ENCODE measurements at regions of chr16 and their contacts with region 1.

Region 1: DNA sequence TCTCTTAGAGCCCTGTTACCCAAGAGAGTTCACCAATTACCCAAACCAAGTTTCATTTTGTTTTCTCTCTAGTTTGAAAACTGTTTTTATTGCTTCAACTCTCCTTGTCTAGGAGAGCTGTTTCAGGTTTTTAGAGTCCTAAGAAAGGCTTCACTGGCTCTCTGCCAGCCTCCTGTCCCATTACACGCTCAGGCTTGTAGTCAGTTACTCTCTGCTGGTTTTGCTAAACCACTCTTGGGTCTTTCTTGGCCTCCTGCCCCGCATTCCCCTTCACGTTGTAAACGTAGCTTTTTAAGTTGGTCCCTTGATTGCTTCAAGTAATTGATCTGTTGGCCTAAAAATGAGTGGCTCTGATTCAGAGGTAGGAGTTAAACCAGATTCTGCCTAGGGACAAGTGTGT is 529.1 kb downstream of the MAF start:
- DNase-seq: no peak
- H3K4me3 Mint-ChIP-seq: no peak overlapping the region
- H3K27ac Mint-ChIP-seq: peak overlapping the region; percentile 21
- H3K4me1 Mint-ChIP-seq: peaks cover 74% of the 10 kb centered on the region
- H3K27me3 Mint-ChIP-seq: peaks cover 5% of the 10 kb centered on the region

Region 2: GRCh38 chr16:78794581-78795250 is 276.7 kb before region 1 on chr16:
- intact Hi-C with region 1: loop called (anchors 1 kb)
- DNase-seq: no peak
- H3K4me3 Mint-ChIP-seq: no peak overlapping the region
- H3K27ac Mint-ChIP-seq: peak overlapping the region; percentile 77
- H3K4me1 Mint-ChIP-seq: peaks cover 35% of the 10 kb centered on the region
- H3K27me3 Mint-ChIP-seq: no peaks in the 10 kb centered on the region

Region 3: GRCh38 chr16:78972986-78973385 is 98.4 kb before region 1 on chr16:
- intact Hi-C with region 1: no loop called
- DNase-seq: no peak
- H3K4me3 Mint-ChIP-seq: no peak overlapping the region
- H3K27ac Mint-ChIP-seq: no peak overlapping the region
- H3K4me1 Mint-ChIP-seq: no peaks in the 10 kb centered on the region
- H3K27me3 Mint-ChIP-seq: peaks cover 6% of the 10 kb centered on the region

Region 4: GRCh38 chr16:79047229-79047983 is 24.0 kb before region 1 on chr16:
- intact Hi-C with region 1: loop called (anchors 2 kb)
- DNase-seq: no peak
- H3K4me3 Mint-ChIP-seq: no peak overlapping the region
- H3K27ac Mint-ChIP-seq: no peak overlapping the region
- H3K4me1 Mint-ChIP-seq: peaks cover 33% of the 10 kb centered on the region
- H3K27me3 Mint-ChIP-seq: no peaks in the 10 kb centered on the region

Region 5: GRCh38 chr16:79217375-79218011 is 146.1 kb after region 1 on chr16:
- intact Hi-C with region 1: loop called (anchors 1 kb)
- DNase-seq: peak; percentile 19
- H3K4me3 Mint-ChIP-seq: no peak overlapping the region
- H3K27ac Mint-ChIP-seq: no peak overlapping the region
- H3K4me1 Mint-ChIP-seq: peaks cover 19% of the 10 kb centered on the region
- H3K27me3 Mint-ChIP-seq: no peaks in the 10 kb centered on the region

Region 6: DNA sequence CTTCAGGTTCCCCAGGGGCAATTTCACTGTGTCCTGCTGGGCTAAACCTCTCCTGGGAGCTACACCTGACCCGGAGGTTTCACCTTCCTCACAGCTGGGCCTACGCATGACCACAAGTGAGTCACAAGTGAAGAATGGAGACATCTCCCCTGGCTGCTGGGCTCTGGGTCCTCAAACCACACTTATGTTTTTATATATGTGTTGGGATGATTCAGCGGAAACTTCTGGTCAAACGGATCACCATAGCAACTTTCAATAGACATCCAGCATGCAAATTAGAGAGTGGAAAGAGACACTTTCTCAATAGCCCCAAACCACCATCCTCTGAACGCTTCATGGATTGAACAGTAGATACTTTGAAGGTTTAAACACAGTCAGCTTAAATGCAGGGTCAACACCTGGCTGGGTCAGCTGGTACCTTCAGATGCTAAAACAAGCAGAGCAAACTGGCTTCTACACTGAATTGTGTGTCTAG is 557.1 kb after region 1 on chr16:
- intact Hi-C with region 1: loop called (anchors 1 kb)
- DNase-seq: peak; percentile 77
- H3K4me3 Mint-ChIP-seq: peak overlapping the region; percentile 68
- H3K27ac Mint-ChIP-seq: peak overlapping the region; percentile 93
- H3K4me1 Mint-ChIP-seq: peaks cover 77% of the 10 kb centered on the region
- H3K27me3 Mint-ChIP-seq: peaks cover 8% of the 10 kb centered on the region

Measured in activated T-helper 1 cell treated with anti-CD3 and anti-CD28 coated beads, Interleukin-12 subunit alpha, Interleukin-12 subunit beta, Interleukin-2, Interleukin-4 antibody, amounts not matched to agents 30 ng/mL and 10 ng/mL and 1 ng/mL, durations not matched to agents 14 hours and 24 hours and 36 hours (primary cell).